ENCODE measurements at regions of chr7 and their contacts with region 1.

Region 1: DNA sequence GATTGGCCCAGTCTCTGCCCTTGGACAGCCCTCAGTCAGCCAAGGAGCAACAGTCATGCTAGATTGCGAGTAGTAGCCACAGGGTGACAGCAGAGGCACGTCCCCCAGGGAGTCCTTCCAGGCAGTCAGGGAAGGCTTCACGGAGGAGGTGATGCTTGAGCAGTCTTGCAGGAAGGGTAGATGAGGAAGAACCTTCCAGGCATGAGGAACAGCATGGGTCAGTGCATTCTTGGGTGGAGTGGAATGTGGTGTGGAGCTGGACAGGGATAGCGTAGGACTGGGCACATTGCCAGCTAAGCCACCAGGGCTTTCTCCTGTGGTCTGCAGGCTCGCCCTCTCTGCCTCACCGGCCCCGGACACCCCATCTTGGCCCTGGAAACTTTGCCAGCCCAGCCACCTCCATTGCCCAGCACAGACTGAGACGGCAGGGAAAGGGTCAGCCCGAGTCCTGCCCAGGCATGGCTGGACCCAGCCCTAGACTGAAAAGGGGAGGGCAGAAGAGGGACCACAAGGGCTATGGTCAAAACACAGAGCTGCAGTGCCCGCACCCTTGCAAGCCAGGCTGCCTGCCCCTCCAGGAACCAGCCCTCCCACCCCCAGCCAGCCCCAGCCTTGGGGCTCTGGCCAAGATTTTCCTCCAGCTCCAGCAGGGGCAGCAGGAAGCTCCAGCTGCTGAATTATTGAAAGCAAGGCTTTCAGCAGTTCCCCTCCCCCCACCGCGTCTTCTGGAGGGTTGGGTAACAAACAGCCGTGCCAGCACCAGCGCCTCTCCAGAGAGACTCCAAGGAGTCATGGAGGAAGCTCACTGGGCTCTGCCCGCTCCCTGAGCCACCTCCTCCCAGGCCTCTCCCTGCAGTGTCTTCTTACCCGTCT is 18.7 kb downstream of the SRRM3 start:
- DNase-seq: peak; percentile 30
- ATAC-seq: peak; percentile 60
- H3K4me3 ChIP-seq: no peak overlapping the region
- H3K27ac ChIP-seq: no peak overlapping the region
- H3K4me1 ChIP-seq: peaks cover 2% of the 10 kb centered on the region; the same call in 1 of the 2 replicates
- H3K27me3 ChIP-seq: peaks cover 36% of the 10 kb centered on the region
- CTCF ChIP-seq: 0 out of 2 replicates have a peak, but pooled peaks have one; percentile 16
- POLR2A ChIP-seq: no peak
- RAD21 ChIP-seq: no peak

Region 2: GRCh38 chr7:76269895-76270294 is 49.5 kb after region 1 on chr7:
- CTCF ChIA-PET with region 1: no interaction called
- POLR2A ChIA-PET with region 1: no interaction called
- dilution Hi-C with region 1: no loop called
- in situ Hi-C with region 1: no loop called
- intact Hi-C with region 1: loop called (anchors 2 kb)
- DNase-seq: no peak
- ATAC-seq: no peak; the same call in 1 of the 2 replicates
- H3K4me3 ChIP-seq: no peak overlapping the region
- H3K27ac ChIP-seq: no peak overlapping the region
- H3K4me1 ChIP-seq: no peaks in the 10 kb centered on the region
- H3K27me3 ChIP-seq: peaks cover 68% of the 10 kb centered on the region
- CTCF ChIP-seq: no peak
- POLR2A ChIP-seq: no peak
- RAD21 ChIP-seq: no peak

Region 3: DNA sequence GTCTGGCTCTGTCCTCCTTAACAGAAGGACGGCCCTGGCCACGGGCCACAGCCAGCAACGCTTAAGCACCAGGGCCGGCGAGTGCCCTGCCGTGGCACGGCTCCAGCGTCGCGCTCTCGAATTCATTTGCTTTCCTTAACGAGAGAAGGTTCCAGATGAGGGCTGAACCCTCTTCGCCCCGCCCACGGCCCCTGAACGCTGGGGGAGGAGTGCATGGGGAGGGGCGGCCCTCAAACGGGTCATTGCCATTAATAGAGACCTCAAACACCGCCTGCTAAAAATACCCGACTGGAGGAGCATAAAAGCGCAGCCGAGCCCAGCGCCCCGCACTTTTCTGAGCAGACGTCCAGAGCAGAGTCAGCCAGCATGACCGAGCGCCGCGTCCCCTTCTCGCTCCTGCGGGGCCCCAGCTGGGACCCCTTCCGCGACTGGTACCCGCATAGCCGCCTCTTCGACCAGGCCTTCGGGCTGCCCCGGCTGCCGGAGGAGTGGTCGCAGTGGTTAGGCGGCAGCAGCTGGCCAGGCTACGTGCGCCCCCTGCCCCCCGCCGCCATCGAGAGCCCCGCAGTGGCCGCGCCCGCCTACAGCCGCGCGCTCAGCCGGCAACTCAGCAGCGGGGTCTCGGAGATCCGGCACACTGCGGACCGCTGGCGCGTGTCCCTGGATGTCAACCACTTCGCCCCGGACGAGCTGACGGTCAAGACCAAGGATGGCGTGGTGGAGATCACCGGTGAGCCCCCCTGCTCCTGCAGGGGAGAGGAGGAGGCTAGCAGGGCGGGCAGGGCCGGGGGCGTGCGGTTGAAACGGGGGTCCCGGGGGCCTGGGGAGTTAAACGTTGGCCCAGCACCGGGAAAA is 82.2 kb after region 1 on chr7 and contains the start of gene HSPB1:
- CTCF ChIA-PET with region 1: no interaction called
- POLR2A ChIA-PET with region 1: no interaction called
- dilution Hi-C with region 1: no loop called
- in situ Hi-C with region 1: no loop called
- intact Hi-C with region 1: no loop called
- DNase-seq: peak; percentile 84
- ATAC-seq: peak; percentile 79
- H3K4me3 ChIP-seq: peak within 1 kb of the TSS; percentile 91
- H3K27ac ChIP-seq: peak within 1 kb of the TSS; percentile 93
- H3K4me1 ChIP-seq: peaks cover 21% of the 10 kb centered on the region
- H3K27me3 ChIP-seq: no peaks in the 10 kb centered on the region
- CTCF ChIP-seq: peak; percentile 1; the same call in 1 of the 2 replicates
- POLR2A ChIP-seq: peak; percentile 98
- RAD21 ChIP-seq: no peak; the same call in none of the 2 replicates
- total RNA-seq, gene HSPB1: 33.2 and 48.6 TPM in 2 replicates

Measured in IMR-90 (cell line).